Posterior vena cava (tissue), 2 donors: ENCODE measurements at regions of chr9 and their contacts with region 1.

Region 1: DNA sequence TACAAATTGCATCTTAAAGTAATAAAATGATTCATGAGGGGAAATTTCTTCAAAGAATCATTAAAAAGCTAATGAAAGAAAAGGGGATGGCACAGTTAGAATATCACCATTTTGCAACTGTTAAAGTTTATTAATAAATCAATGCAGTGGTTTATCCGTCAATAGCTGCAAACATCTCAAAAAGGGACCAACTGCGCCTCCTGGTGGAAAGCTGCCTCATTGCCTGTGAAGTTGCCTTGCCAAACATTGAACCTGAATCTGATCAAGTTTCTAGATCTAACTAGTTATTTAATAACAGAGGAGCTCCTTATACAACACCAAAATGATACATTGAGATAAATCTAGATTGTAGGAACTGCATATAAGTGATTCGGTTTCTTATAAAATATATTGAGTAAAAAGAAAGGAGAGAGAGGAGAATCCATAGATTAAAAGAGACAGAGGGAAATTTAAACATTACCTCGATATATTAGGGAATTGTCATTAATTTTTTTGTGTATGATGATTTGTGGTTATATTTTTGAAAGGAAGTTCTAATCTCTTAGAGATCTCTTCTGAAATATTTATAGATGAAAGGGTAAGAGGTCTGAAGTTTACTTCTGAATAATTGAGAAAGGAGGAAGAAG is 6.9 kb upstream of the NDUFB6 start:
- DNase-seq: peak; percentile 88

Region 2: DNA sequence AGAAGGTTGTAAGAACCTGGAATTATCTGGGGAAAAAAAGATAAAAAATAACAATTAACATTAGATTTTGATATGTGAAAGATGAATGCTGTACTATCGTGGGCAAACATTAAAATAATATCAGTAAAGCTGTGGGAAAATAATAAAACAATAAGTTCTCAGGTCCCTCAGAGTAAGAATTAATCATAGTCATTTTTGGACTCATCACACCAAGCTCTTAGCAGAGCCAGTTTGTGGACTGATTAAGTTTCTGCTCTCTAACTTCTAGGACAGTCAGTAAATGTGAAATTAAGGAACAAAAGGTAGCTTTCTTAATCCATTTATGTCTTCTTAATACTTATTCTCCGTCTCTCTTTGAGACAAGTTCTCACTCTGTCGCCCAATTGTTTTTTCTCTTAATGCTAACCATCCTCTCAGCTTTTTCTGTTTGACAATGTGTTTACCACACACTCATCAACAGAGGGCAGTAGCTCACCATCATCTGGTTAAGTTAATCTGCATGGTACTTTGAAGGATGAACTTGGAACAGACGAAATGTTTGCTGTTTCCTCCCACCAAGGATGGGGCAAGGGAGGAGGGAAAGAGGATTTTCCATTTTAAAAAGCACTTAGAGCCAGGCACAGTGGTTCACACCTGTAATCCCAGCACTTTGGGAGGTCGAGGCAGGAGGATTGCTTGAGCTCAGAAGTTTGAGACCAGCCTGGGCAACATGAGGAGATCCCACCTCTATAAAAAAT is 200.7 kb before region 1 on chr9:
- intact Hi-C with region 1: loop called (anchors 2 kb)
- DNase-seq: no peak

Region 3: DNA sequence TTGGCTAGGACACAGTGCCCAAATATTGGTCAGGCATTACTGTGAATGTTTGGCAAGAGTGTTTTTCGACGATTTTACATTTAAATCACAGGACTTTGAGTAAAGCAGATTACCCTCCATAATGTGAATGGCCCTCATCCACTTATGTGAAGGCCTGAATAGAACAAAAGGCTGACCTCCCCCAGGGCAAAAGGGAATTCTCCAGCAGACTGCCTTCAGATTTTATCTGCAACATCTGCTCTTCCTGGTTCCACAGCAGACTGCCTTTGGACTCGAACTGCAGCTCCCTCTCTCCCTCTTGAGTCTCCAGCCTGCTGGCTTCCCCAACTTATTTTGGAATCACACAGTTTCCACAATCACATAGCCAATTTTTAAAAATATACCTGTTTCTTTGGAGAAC is 196.4 kb after region 1 on chr9:
- intact Hi-C with region 1: no loop called
- DNase-seq: no peak